ENCODE measurements at regions of chr14 and their contacts with region 1.

Region 1: DNA sequence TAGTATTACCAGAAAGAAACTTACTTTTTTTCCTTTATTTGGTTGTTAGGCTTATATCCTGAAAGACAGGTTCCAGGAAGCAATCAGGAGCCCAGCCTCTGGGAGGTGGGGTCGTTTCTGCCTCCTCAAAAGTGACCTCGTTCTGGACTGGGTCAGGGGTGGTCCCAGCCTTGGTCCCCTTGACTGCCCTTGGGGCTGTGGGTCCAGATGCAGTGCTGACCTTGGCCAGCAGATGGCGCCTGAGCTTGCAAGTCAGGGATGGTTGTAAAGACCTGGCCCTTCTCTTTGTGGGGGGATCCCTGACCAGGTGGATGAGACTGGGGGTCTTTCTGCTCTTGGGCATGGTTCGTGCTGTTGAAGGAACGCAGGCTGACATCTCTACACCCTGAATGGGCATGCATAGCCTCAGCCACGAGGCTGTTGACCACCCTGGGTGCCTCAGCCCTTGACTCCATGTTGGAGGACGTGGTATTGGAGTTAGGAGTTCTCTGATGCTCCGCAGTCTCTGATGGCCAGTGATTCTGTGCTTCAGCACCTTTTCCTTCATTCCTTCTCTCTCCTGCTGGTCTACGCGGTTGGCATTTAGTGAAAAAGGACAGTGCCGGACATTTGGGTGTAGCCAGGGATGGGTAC is 62.4 kb downstream of the ADCK1 start:
- DNase-seq: peak; percentile 87
- H3K4me3 Mint-ChIP-seq: no peak overlapping the region
- H3K27ac Mint-ChIP-seq: no peak overlapping the region
- H3K4me1 Mint-ChIP-seq: no peaks in the 10 kb centered on the region
- H3K27me3 Mint-ChIP-seq: no peaks in the 10 kb centered on the region

Region 2: DNA sequence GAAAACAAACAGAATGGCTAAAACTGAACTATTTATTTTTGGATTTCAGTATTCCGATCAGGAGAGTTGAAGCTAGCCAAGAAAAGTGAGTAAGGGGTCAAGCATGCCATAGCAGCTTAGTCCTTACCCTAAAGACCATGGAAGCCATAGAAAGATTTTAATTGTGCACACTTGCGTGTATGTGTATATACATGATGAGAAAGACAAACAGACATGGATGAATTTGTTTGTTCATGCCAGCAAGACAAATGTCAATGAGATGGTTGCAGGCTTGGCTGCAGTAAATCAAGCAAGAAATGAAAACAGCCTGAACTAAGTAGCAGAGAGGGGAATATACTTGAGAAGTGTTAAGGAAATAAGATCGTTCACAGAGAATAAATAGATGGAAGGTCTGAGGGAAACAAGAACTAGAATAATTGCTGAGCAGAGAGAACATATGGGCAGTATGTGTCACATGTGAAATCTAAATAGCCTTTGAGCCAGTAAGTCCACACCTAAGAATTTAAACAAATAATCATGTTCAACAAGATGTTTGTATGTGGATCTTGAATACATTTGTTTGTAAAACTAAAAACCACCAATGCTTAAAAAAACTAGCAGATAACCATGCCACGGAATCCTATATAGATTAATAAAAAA is 116.1 kb before region 1 on chr14:
- CTCF ChIA-PET with region 1: no interaction called
- intact Hi-C with region 1: no loop called
- DNase-seq: no peak
- H3K4me3 Mint-ChIP-seq: no peak overlapping the region
- H3K27ac Mint-ChIP-seq: no peak overlapping the region
- H3K4me1 Mint-ChIP-seq: peaks cover 18% of the 10 kb centered on the region
- H3K27me3 Mint-ChIP-seq: no peaks in the 10 kb centered on the region

Region 3: DNA sequence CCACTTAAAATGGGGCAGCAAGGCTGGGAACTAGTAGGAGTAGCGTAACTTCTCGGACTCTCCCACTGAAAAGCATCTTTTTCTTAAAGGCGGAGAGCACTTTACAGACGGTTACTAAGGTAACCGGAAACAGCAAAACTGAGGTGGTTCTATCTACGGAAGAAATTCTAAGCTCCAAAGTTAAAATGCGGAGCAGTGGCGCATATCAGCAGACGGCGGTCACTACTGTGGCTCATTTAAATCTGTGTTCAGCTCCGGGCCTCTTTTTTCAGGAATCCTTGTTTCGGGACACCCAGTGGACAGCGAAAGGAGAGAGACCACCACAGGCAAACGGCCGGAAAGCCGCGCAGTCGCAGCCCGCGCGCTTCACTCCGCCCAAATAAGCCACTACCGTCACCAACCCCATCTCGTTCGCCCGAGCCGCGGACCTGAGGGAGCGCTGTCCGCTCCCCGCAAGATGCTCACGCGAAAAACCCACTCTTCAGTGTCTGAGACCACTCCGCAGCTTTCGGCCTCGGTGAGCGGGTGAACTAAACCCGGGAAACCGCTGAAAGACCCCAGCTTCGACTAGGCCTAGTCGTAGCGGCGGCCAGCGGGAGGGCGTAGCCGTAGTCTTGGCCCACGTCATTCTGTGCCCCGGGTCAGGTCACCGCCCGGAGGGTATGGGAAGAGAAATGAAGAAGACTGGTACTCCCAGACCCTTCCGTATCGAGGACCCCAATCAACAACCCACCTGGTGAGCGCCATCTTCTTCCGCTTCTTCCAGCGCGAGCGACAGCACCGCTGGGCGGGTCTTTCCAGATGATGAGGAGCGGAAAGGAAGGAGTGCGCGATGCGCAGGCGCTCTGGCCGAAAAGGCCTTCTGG is 101.7 kb before region 1 on chr14 and contains the start of gene SNW1:
- CTCF ChIA-PET with region 1: no interaction called
- intact Hi-C with region 1: no loop called
- DNase-seq: peak; percentile 95
- H3K4me3 Mint-ChIP-seq: peak within 1 kb of the TSS; percentile 94
- H3K27ac Mint-ChIP-seq: peak within 1 kb of the TSS; percentile 95
- H3K4me1 Mint-ChIP-seq: peaks cover 32% of the 10 kb centered on the region
- H3K27me3 Mint-ChIP-seq: no peaks in the 10 kb centered on the region
- total RNA-seq, gene SNW1: 117 to 129 TPM

Region 4: GRCh38 chr14:77799863-77800730 is 62.2 kb before region 1 on chr14 and contains the start of gene ADCK1:
- CTCF ChIA-PET with region 1: no interaction called
- intact Hi-C with region 1: no loop called
- DNase-seq: peak; percentile 91
- H3K4me3 Mint-ChIP-seq: peak within 1 kb of the TSS; percentile 86
- H3K27ac Mint-ChIP-seq: peak within 1 kb of the TSS; percentile 84
- H3K4me1 Mint-ChIP-seq: peaks cover 12% of the 10 kb centered on the region
- H3K27me3 Mint-ChIP-seq: no peaks in the 10 kb centered on the region
- total RNA-seq, gene ADCK1: 4.2 to 5.1 TPM

Region 5: DNA sequence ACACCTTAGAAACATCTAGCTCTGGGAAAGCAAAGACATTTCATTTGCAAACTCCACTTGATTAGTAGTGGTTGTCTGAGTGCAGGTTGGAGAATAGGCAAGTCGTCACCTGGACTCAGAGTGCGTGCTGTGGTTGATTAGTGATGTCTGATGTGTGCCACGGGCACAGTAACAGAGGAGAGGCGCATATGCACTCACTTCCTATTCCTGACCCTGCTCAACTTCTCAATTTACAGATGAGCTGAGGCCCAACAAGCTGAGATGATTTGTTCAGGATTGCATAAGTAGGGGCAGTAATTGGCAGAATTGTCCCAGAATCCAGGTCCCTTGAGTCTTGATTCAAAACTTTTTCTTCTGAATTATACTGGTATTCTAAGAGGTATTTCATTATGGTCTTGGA is 17.5 kb before region 1 on chr14:
- CTCF ChIA-PET with region 1: interaction called, 15 read pairs
- intact Hi-C with region 1: no loop called
- DNase-seq: no peak
- H3K4me3 Mint-ChIP-seq: no peak overlapping the region
- H3K27ac Mint-ChIP-seq: no peak overlapping the region
- H3K4me1 Mint-ChIP-seq: no peaks in the 10 kb centered on the region
- H3K27me3 Mint-ChIP-seq: no peaks in the 10 kb centered on the region

Region 6: GRCh38 chr14:78022059-78022458 is 159.8 kb after region 1 on chr14:
- CTCF ChIA-PET with region 1: no interaction called
- intact Hi-C with region 1: loop called (anchors 5 kb)
- DNase-seq: peak; percentile 79
- H3K4me3 Mint-ChIP-seq: no peak overlapping the region
- H3K27ac Mint-ChIP-seq: no peak overlapping the region
- H3K4me1 Mint-ChIP-seq: no peaks in the 10 kb centered on the region
- H3K27me3 Mint-ChIP-seq: peaks cover 12% of the 10 kb centered on the region

Region 7: DNA sequence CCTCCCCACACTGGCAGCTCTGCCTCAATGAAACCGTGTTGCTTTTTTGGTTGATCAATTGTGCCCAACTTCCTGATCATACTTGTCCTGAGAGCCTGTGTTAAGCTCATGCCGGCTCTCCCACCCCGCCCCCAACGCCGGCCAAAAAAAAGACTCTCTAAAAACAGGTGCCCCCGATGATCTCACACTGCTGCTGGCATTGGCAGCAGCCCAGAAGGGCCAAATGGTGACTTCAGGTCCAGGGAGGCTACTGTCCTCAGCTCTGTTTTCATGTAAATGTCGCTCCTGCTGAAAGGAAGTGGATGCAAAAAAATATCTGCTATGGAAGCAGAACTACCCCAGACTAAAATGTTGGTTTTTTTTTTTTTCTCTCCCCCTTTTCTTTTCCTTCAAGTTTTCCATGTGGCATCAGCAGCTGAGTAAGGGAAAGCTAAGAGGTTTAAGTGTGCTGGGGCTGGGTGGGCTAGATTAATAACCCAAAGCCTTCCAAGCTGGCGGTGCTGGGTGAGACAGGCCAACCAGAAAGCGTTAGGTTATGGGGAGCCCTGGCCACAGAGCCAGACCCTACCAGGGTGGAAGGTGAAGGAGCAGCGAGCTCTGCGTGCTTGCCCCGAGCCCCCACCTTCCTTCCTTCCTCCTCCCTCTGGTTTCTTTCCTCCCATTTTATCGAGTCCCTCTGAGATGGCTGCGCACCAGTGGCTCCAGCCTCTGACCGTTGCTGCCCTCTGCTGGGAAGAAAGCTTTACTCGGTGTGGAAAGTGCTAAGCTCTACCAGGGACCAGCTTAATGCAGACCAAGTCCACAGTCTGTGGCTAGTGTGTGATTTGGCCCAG is 704.0 kb after region 1 on chr14:
- CTCF ChIA-PET with region 1: interaction called, 23 read pairs
- intact Hi-C with region 1: loop called (anchors 1 kb)
- DNase-seq: peak; percentile 85
- H3K4me3 Mint-ChIP-seq: no peak overlapping the region
- H3K27ac Mint-ChIP-seq: no peak overlapping the region
- H3K4me1 Mint-ChIP-seq: peaks cover 2% of the 10 kb centered on the region
- H3K27me3 Mint-ChIP-seq: no peaks in the 10 kb centered on the region

Region 8: DNA sequence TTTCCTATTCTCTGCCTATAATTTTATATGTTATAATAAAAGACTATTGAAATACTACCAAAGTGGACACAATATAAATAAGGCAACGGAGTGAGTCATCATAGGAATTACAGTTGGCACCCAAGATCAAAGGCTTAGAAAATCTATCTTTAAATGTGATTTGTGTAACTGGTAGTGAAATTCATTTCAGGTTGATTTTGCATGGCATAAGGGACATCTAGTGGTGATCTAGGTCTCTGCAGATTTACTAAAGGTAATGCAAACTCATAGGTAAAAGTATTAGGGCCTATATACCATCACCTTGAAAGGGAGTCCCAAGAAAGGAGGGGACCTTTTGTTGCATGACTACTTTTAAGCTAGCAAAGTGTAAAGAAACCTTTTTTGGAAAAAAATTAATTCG is 835.1 kb after region 1 on chr14:
- CTCF ChIA-PET with region 1: no interaction called
- intact Hi-C with region 1: loop called (anchors 5 kb)
- DNase-seq: no peak
- H3K4me3 Mint-ChIP-seq: no peak overlapping the region
- H3K27ac Mint-ChIP-seq: no peak overlapping the region
- H3K4me1 Mint-ChIP-seq: no peaks in the 10 kb centered on the region
- H3K27me3 Mint-ChIP-seq: no peaks in the 10 kb centered on the region